Testis (tissue), 5 donors: ENCODE measurements at regions of chr17 and their contacts with region 1.

Region 1: GRCh38 chr17:56592487-56593085 is 913 bp upstream of the NOG start:
- DNase-seq: peak; percentile 68
- H3K4me3 ChIP-seq: peak overlapping the region; percentile 53 to 64
- H3K27ac ChIP-seq: no peak overlapping the region
- H3K4me1 ChIP-seq: peaks cover 16% of the 10 kb centered on the region
- H3K27me3 ChIP-seq: no peaks in the 10 kb centered on the region
- CTCF ChIP-seq: peak; percentile 86 to 92 (median 87)
- POLR2A ChIP-seq: no peak

Region 2: DNA sequence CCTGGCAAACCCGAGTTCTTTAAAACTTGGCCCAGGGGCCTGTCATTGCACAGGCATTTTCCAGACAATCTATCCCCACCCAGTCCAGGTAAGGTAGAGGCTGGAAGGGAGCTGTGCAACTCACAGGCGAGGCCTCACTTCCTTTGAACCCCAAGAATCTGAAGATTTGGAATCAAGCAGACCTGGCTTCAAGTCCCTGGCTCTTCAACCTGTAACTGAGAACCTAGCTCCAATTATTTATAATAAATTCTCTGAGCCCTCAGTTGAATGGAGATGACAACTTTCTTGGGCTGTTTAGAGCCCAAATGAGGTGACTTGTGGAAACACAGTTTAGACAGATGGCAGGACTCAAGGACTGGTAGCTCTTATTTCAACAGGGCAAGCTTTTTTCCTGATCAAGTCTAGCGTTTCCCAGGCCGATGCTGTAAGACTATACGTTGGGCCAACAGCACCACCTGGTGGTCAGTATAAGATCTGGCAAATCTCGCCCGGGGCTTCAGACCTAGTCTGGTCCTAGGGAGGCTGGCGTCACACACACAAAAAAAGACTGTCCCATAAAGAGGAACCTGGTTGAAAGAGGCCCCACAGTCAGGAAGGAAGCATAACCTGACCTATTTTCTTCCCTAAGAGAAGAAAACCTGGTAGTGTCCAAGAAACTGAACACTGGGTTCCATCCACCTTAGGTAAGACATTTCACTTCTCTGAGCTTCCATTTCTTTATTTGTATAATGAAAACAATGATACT is 123.2 kb after region 1 on chr17:
- intact Hi-C with region 1: loop called (anchors 10 kb)
- DNase-seq: peak; percentile 90
- H3K4me3 ChIP-seq: no peak overlapping the region
- H3K27ac ChIP-seq: no peak overlapping the region
- H3K4me1 ChIP-seq: no peaks in the 10 kb centered on the region
- H3K27me3 ChIP-seq: no peaks in the 10 kb centered on the region
- CTCF ChIP-seq: peak; percentile 65 to 81 (median 80)
- POLR2A ChIP-seq: no peak

Region 3: GRCh38 chr17:57142925-57143324 is 550.3 kb after region 1 on chr17:
- intact Hi-C with region 1: no loop called
- DNase-seq: peak; percentile 34
- H3K4me3 ChIP-seq: no peak overlapping the region
- H3K27ac ChIP-seq: no peak overlapping the region
- H3K4me1 ChIP-seq: peaks cover 3% of the 10 kb centered on the region
- H3K27me3 ChIP-seq: no peaks in the 10 kb centered on the region
- CTCF ChIP-seq: no peak
- POLR2A ChIP-seq: no peak